ENCODE measurements at regions of chr17 and their contacts with region 1.

Region 1: GRCh38 chr17:29617125-29617480 is 5.6 kb downstream of the CORO6 start:
- DNase-seq: peak; percentile 83 to 92 (median 87)
- H3K4me3 ChIP-seq: peak overlapping the region; percentile 72
- H3K4me3 Mint-ChIP-seq: peak overlapping the region; percentile 91 to 97 (median 93)
- H3K27ac ChIP-seq: peak overlapping the region; percentile 75
- H3K27ac Mint-ChIP-seq: peak overlapping the region in 7 of 8 donors; percentile 42 to 89 (median 67)
- H3K4me1 ChIP-seq: peaks cover 44% of the 10 kb centered on the region
- H3K4me1 Mint-ChIP-seq: peaks cover 36 to 55% (median 40%) of the 10 kb centered on the region in 3 donors
- H3K27me3 ChIP-seq: no peaks in the 10 kb centered on the region
- H3K27me3 Mint-ChIP-seq: no peaks in the 10 kb centered on the region

Region 2: GRCh38 chr17:29544066-29544465 is 73.0 kb before region 1 on chr17:
- CTCF ChIA-PET with region 1: no interaction called
- POLR2A ChIA-PET with region 1: no interaction called
- DNase-seq: no peak
- H3K4me3 ChIP-seq: no peak overlapping the region
- H3K4me3 Mint-ChIP-seq: no peak overlapping the region
- H3K27ac ChIP-seq: no peak overlapping the region
- H3K27ac Mint-ChIP-seq: no peak overlapping the region
- H3K4me1 ChIP-seq: peaks cover 2% of the 10 kb centered on the region
- H3K4me1 Mint-ChIP-seq: peaks cover 11 to 18% (median 15%) of the 10 kb centered on the region in 3 donors
- H3K27me3 ChIP-seq: no peaks in the 10 kb centered on the region
- H3K27me3 Mint-ChIP-seq: no peaks in the 10 kb centered on the region

Region 3: GRCh38 chr17:29579866-29580771 is 37.0 kb before region 1 on chr17:
- CTCF ChIA-PET with region 1: interaction called, 436 read pairs
- POLR2A ChIA-PET with region 1: interaction called, 10 read pairs
- DNase-seq: peak; percentile 83 to 92 (median 86)
- H3K4me3 ChIP-seq: no peak overlapping the region
- H3K4me3 Mint-ChIP-seq: peak overlapping the region in 3 of 7 donors; percentile 6 to 51 (median 11)
- H3K27ac ChIP-seq: no peak overlapping the region
- H3K27ac Mint-ChIP-seq: peak overlapping the region; percentile 46 to 93 (median 87)
- H3K4me1 ChIP-seq: peaks cover 17% of the 10 kb centered on the region
- H3K4me1 Mint-ChIP-seq: peaks cover 17 to 23% (median 17%) of the 10 kb centered on the region in 3 donors
- H3K27me3 ChIP-seq: no peaks in the 10 kb centered on the region
- H3K27me3 Mint-ChIP-seq: peaks cover 0 to 2% of the 10 kb centered on the region in 2 donors

Region 4: GRCh38 chr17:29633886-29634285 is 16.8 kb after region 1 on chr17:
- CTCF ChIA-PET with region 1: interaction called, 17 read pairs
- POLR2A ChIA-PET with region 1: interaction called, 6 read pairs
- DNase-seq: no peak
- H3K4me3 ChIP-seq: no peak overlapping the region
- H3K4me3 Mint-ChIP-seq: no peak overlapping the region
- H3K27ac ChIP-seq: no peak overlapping the region
- H3K27ac Mint-ChIP-seq: peak overlapping the region in 6 of 8 donors; percentile 6 to 69 (median 63)
- H3K4me1 ChIP-seq: no peaks in the 10 kb centered on the region
- H3K4me1 Mint-ChIP-seq: peaks cover 10 to 13% (median 11%) of the 10 kb centered on the region in 3 donors
- H3K27me3 ChIP-seq: no peaks in the 10 kb centered on the region
- H3K27me3 Mint-ChIP-seq: no peaks in the 10 kb centered on the region

Region 5: DNA sequence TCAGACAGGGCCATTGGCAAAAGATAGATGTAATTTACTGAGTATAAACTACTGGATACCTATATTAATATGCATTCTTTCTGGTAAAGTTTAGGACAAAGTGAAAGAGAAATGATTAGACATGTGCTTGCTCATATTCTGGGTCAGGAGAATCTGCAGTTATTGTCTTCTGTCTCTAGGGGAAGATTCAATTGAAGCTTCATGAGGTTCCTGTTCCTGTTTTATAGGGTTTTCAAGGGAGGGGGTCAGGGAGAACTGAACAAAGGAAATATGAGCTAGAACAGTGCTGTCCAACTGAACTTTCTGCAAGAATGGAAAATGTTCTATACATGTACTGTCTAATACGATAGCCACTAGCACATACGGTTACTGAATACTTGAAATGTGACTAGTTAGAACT is 65.0 kb after region 1 on chr17:
- CTCF ChIA-PET with region 1: interaction called, 18 read pairs
- POLR2A ChIA-PET with region 1: no interaction called
- DNase-seq: no peak
- H3K4me3 ChIP-seq: no peak overlapping the region
- H3K4me3 Mint-ChIP-seq: no peak overlapping the region
- H3K27ac ChIP-seq: peak overlapping the region; percentile 21
- H3K27ac Mint-ChIP-seq: peak overlapping the region; percentile 2 to 69 (median 49)
- H3K4me1 ChIP-seq: peaks cover 17% of the 10 kb centered on the region
- H3K4me1 Mint-ChIP-seq: peaks cover 17 to 32% (median 27%) of the 10 kb centered on the region in 3 donors
- H3K27me3 ChIP-seq: no peaks in the 10 kb centered on the region
- H3K27me3 Mint-ChIP-seq: no peaks in the 10 kb centered on the region

Region 6: DNA sequence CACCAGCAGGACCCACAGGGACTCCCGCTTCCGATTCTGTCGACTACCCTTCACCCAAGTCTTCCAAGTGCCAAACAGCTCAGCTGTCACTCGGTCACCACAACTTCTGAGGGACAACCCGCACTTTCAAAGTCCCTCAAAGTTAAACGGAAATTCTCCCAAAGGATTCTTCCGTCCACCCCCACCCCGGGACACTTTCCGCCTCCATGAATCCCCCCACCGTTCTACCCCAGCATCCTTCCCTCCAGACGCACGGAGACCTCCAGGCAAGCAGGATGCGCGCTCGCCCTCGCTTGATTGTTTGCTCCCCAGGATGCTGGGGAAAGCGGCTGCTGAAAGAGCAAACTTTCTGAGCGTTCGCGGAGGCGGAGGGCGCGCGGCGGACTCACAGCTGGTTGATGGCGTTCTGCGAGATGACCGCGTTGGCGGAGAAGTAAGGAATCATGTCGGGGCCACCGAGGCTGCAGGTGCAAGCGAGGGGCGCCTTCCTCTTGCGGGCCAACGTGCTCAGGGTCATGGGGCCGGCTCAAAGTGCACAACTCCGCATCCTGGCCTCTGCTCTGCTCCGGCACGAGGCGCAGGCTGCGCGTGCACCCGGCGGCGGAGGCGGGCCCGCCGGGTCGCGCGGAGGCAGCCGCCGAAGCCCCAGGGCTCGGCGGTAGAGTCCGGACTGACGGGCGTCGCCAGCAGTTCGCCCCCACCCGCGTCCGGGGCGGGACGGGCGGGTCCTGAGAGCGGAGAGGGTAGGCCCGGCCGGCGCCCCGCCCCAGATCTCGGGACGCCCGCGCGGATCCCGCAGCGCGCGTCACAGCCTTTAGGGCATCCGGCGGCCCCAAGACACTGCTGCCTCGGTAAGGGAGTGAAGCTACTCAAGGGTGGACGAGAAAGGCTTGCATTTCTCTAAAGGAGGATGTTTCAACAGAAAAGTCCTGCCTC is 143.9 kb after region 1 on chr17:
- CTCF ChIA-PET with region 1: interaction called, 14 read pairs
- POLR2A ChIA-PET with region 1: interaction called, 20 read pairs
- DNase-seq: peak; percentile 87 to 94 (median 91)
- H3K4me3 ChIP-seq: peak overlapping the region; percentile 62
- H3K4me3 Mint-ChIP-seq: peak overlapping the region; percentile 91 to 97 (median 93)
- H3K27ac ChIP-seq: peak overlapping the region; percentile 55
- H3K27ac Mint-ChIP-seq: peak overlapping the region; percentile 78 to 99 (median 95)
- H3K4me1 ChIP-seq: peaks cover 44% of the 10 kb centered on the region
- H3K4me1 Mint-ChIP-seq: peaks cover 34 to 50% (median 36%) of the 10 kb centered on the region in 3 donors
- H3K27me3 ChIP-seq: no peaks in the 10 kb centered on the region
- H3K27me3 Mint-ChIP-seq: no peaks in the 10 kb centered on the region

Measured in CD8-positive, alpha-beta memory T cell (primary cell).